Esophagus squamous epithelium (tissue), 5 donors: ENCODE measurements at regions of chr20 and their contacts with region 1.

Region 1: DNA sequence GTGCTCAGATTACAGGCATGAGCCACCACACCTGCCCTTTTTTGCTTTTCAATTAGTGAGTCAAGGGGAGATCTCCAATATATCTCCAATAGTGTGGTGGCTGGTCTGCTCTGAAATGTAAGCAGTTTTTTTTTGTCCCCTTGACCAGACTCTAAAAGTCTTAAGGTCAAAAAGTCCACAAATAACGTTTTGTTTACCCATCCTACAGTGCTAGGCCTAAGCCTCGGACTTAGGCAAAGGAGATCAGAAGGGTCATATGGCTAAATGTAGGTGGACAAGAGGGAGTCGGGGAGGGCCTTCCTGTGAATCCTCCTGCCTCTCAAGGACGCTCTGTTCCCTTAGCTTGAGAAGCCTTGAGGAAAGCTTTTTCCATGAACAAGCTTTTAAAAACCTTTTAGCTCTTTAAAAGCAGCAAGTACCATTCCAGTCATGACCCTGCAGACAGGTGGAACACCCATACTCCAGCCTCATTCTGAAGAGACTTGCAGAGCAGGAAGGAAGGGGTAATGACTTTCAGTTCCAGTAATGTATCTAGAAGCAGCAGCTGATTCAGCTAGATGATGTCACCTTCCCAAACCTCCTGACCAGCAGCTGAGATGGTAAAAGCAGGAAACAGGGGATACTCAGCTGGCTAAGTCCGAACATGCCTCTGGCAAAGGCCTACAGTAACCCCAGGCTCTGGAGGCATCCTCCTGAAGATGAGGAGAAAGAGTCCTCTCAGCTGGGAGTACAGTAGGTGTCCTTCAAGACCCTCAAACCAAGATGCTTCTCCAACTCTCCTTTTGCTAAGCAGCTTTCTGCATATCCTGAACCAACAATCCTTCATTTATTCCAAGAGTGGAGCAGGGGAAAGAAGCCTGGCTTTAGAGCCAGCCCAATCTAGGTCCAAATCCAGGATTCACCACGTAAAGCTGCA is 23.6 kb downstream of the BCL2L1 start:
- DNase-seq: no peak
- H3K4me3 ChIP-seq: no peak overlapping the region
- H3K27ac ChIP-seq: peak overlapping the region; percentile 70 to 87 (median 86)
- H3K4me1 ChIP-seq: peaks cover 26 to 65% (median 40%) of the 10 kb centered on the region in 3 donors
- H3K27me3 ChIP-seq: no peaks in the 10 kb centered on the region
- CTCF ChIP-seq: no peak
- POLR2A ChIP-seq: peak in 1 of 4 donors; percentile 39

Region 2: DNA sequence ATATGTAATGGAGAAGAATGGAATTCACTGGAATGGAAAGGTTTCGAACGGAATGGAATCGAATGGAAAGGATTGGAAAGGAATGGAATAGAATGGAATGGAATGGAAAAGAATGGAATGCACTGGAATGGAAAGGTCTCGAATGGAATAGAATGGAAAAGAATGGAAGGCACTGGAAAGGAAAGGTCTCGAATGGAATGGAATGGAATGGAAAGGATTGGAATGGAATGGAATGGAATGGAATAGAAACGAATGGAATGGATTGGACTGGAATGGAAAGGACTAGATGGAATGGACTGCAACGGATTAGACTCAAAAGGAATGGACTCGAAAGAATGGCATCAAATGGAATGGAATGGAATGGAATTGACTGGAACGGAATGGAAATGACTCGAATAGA is 462.1 kb before region 1 on chr20:
- intact Hi-C with region 1: no loop called
- DNase-seq: no peak
- H3K4me3 ChIP-seq: no peak overlapping the region
- H3K27ac ChIP-seq: no peak overlapping the region
- H3K4me1 ChIP-seq: no peaks in the 10 kb centered on the region
- H3K27me3 ChIP-seq: no peaks in the 10 kb centered on the region
- CTCF ChIP-seq: no peak
- POLR2A ChIP-seq: no peak

Region 3: DNA sequence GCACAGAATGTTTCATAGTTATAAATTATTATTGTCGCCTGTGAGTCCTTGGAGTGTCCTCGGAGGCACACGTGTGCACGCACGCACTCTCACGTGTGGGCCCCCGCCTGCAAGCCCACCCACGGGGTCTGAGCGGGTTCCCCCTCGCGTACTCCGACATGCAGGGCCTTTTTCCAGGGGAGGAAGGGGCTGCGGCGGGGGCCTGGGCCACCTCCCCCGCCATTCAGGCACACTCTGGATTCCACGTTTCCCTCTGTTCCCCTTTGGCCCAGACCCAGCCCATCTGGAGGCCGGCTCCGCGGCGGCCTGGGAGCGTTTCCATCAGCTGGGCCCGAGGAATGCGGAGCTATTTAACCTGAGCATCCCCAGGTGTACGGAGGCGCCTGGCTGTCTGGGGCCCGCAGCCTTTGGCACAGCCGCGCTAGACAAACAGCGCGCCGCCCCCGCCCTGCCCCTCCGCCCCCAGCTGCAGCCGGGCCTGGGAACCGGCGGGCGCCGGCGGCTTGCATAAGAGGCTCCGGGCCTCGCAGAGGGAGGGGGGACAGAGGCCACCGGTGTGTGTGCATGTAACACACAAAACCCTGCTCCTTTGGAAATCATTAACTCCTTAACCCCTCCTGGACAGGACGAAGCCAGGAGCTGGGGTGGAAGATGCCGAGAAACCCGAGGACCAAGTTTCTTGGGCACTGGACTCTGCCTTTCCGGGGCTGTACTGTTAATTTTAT is 90.6 kb before region 1 on chr20:
- intact Hi-C with region 1: no loop called
- DNase-seq: no peak
- H3K4me3 ChIP-seq: peak overlapping the region in 3 of 4 donors; percentile 78 to 91 (median 87)
- H3K27ac ChIP-seq: peak overlapping the region; percentile 94 to 97 (median 96)
- H3K4me1 ChIP-seq: peaks cover 30 to 98% (median 33%) of the 10 kb centered on the region in 3 donors
- H3K27me3 ChIP-seq: peaks cover 0 to 9% (median 0%) of the 10 kb centered on the region in 4 donors
- CTCF ChIP-seq: peak in 1 of 6 experiments; percentile 1
- POLR2A ChIP-seq: peak in 1 of 4 donors; percentile 20

Region 4: GRCh38 chr20:31661625-31662371 is 37.3 kb before region 1 on chr20:
- intact Hi-C with region 1: loop called (anchors 2 kb)
- DNase-seq: no peak
- H3K4me3 ChIP-seq: peak overlapping the region; percentile 10 to 62 (median 40)
- H3K27ac ChIP-seq: peak overlapping the region; percentile 68 to 82 (median 80)
- H3K4me1 ChIP-seq: peaks cover 26 to 55% (median 38%) of the 10 kb centered on the region in 3 donors
- H3K27me3 ChIP-seq: no peaks in the 10 kb centered on the region
- CTCF ChIP-seq: peak; percentile 53 to 91 (median 74)
- POLR2A ChIP-seq: peak in 1 of 4 donors; percentile 38

Region 5: GRCh38 chr20:32325706-32326503 is 626.8 kb after region 1 on chr20:
- intact Hi-C with region 1: no loop called
- DNase-seq: no peak
- H3K4me3 ChIP-seq: no peak overlapping the region
- H3K27ac ChIP-seq: peak overlapping the region in 2 of 4 donors; percentile 3 to 5
- H3K4me1 ChIP-seq: peaks cover 0 to 4% (median 0%) of the 10 kb centered on the region in 3 donors
- H3K27me3 ChIP-seq: no peaks in the 10 kb centered on the region
- CTCF ChIP-seq: no peak
- POLR2A ChIP-seq: no peak